ENCODE measurements at regions of chr11 and their contacts with region 1.

Region 1: GRCh38 chr11:117946842-117947526 is 17.8 kb upstream of the TMPRSS13 start:
- DNase-seq: peak; percentile 89 to 94 (median 89)
- ATAC-seq: peak; percentile 90 to 96 (median 94)
- H3K4me3 ChIP-seq: no peak overlapping the region
- H3K27ac ChIP-seq: no peak overlapping the region
- H3K4me1 ChIP-seq: peaks cover 0 to 68% (median 7%) of the 10 kb centered on the region in 12 donors
- H3K27me3 ChIP-seq: peaks cover 0 to 5% (median 0%) of the 10 kb centered on the region in 9 donors
- CTCF ChIP-seq: peak; percentile 94 to 99 (median 98)
- POLR2A ChIP-seq: no peak

Region 2: GRCh38 chr11:117426269-117426685 is 520.7 kb before region 1 on chr11:
- intact Hi-C with region 1: loop called in 7 of 10 experiments (anchors 2 to 10 kb)
- DNase-seq: peak; percentile 46 to 79 (median 66)
- ATAC-seq: peak in 3 of 4 donors; percentile 56 to 72 (median 70)
- H3K4me3 ChIP-seq: no peak overlapping the region
- H3K27ac ChIP-seq: no peak overlapping the region
- H3K4me1 ChIP-seq: peaks cover 0 to 8% (median 1%) of the 10 kb centered on the region in 12 donors
- H3K27me3 ChIP-seq: no peaks in the 10 kb centered on the region
- CTCF ChIP-seq: peak; percentile 85 to 97 (median 94)
- POLR2A ChIP-seq: no peak

Region 3: DNA sequence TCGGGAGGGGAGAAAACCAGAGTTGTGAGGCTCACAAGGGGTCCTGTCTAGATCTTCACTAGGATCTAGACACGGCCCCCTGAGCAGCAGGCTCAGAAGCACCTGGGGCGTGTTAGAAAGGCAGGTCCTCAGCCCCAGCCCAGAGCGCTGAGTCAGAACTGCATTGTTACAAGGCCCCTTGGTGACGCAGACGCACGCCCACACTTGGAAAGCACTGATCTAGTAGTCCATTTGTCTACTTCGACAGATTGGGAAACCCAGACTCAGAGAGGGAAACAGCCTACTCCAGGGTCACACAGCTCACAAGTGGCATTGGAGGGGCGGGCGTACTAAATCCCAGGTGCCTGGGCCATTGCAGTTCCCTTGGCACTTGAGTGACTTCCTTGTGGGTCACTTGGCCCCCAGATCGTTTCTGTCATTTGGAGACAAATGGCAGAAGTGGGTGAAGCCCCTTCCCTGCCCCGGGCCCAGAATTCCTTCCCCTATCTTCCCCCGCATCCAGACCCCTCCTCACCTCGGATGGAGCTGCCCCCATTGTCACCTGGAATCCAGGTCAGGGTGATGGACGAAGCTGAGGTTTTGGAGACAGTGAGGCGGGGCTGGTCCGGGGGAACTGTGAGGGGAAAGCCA is 508.5 kb before region 1 on chr11:
- intact Hi-C with region 1: loop called in 2 of 10 experiments (anchors 10 kb)
- DNase-seq: no peak
- ATAC-seq: no peak
- H3K4me3 ChIP-seq: no peak overlapping the region
- H3K27ac ChIP-seq: no peak overlapping the region
- H3K4me1 ChIP-seq: peaks cover 0 to 3% (median 0%) of the 10 kb centered on the region in 12 donors
- H3K27me3 ChIP-seq: peaks cover 0 to 9% (median 0%) of the 10 kb centered on the region in 9 donors
- CTCF ChIP-seq: no peak
- POLR2A ChIP-seq: no peak

Region 4: DNA sequence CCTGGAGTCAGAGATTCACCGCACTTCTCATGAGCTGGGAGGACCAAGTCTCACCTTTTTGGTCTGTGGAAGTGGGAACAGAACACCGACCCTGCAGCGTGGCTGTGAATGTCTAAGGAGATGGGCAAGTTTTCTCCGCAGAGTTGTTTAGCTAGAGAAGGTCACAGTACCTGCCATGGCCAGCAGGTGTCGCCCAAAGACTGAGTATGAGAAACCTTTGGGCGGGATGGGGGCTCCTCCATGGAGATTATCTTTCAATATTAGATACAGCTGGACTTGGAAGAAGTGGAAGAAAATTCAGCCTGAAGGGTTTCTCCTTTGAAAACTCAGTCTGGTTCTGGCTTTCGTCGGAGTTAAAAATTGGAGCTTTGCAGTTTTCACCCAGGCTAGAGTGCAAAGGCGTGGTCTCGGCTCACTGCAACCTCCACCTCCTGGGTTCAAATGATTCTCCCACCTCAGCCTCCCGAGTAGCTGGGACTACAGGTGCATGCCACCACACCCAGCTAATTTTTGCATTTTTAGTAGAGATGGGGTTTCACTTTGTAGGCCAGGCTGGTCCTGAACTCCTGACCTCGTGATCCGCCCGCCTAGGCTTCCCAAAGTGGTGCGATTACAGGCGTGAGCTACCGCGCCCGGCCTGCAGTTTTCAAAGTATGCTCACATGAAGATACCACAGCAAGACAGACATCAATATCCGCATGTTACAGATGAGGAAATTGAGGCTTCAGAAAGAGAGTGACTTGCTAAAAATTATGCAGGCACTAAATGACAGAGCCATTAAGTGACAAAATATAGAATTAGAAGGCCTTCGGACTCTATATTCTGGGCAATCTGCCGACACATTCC is 139.3 kb before region 1 on chr11:
- intact Hi-C with region 1: loop called in 1 of 10 experiments (anchors 1 kb)
- DNase-seq: peak; percentile 70 to 89 (median 79)
- ATAC-seq: peak; percentile 31 to 59 (median 45)
- H3K4me3 ChIP-seq: no peak overlapping the region
- H3K27ac ChIP-seq: no peak overlapping the region
- H3K4me1 ChIP-seq: peaks cover 0 to 23% (median 3%) of the 10 kb centered on the region in 12 donors
- H3K27me3 ChIP-seq: peaks cover 0 to 12% (median 0%) of the 10 kb centered on the region in 9 donors
- CTCF ChIP-seq: peak; percentile 84 to 96 (median 89)
- POLR2A ChIP-seq: no peak

Region 5: GRCh38 chr11:117817368-117818040 is 129.5 kb before region 1 on chr11:
- intact Hi-C with region 1: loop called in 9 of 10 experiments (anchors 1 to 5 kb)
- DNase-seq: peak; percentile 78 to 88 (median 80)
- ATAC-seq: peak; percentile 43 to 73 (median 67)
- H3K4me3 ChIP-seq: peak overlapping the region in 6 of 12 donors; percentile 7 to 47 (median 32)
- H3K27ac ChIP-seq: peak overlapping the region in 6 of 12 donors; percentile 28 to 75 (median 42)
- H3K4me1 ChIP-seq: peaks cover 0 to 60% (median 28%) of the 10 kb centered on the region in 12 donors
- H3K27me3 ChIP-seq: no peaks in the 10 kb centered on the region
- CTCF ChIP-seq: peak; percentile 97 to 100 (median 99)
- POLR2A ChIP-seq: no peak

Region 6: DNA sequence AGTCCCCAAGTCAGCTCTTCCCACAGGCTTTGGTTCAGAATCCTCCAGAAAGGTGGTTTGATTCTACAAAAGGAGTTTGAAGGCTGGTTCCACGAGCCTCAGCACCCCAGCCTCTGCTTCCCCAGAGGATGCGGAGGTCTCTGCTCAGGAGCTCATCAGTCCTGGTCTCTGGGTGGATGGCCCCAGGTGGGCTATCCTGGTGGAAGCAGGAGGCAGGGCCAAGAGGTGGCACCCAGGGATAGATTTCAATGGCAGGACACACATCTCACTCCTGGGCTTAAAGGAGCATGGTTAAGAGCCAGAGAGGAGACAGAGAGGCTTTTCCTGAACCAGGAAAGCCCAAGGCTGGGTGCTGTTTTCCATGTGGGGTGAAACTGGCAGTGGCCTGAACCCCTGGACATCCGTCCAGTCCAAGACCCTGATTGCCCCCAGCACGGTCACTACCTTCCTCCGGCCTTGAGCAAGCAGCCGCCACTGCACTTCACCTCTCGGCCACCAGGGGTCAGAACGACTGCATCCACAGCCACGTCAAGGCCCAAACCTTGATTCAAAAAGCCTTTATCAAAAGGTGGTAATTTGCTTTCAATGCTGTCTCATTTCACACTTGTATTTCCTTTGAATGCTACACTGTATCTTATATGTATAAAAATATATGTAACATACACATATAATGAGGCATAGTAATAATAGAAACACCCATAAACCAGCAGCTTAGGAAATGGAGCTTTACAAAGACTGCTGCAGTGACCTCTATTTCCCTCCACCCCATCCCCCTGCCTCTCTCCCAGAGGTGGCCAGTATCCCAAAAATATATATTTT is 103.1 kb before region 1 on chr11:
- intact Hi-C with region 1: loop called (anchors 1 to 2 kb)
- DNase-seq: peak; percentile 77 to 90 (median 83)
- ATAC-seq: peak in 3 of 4 donors; percentile 76 to 83 (median 81)
- H3K4me3 ChIP-seq: no peak overlapping the region
- H3K27ac ChIP-seq: peak overlapping the region in 2 of 12 donors; percentile 16 to 20
- H3K4me1 ChIP-seq: peaks cover 0 to 23% (median 9%) of the 10 kb centered on the region in 12 donors
- H3K27me3 ChIP-seq: no peaks in the 10 kb centered on the region
- CTCF ChIP-seq: peak; percentile 97 to 100 (median 99)
- POLR2A ChIP-seq: no peak